Caco-2 (cell line): ENCODE measurements at regions of chr2 and their contacts with region 1.

Region 1: GRCh38 chr2:221322741-221323140 is 249.4 kb downstream of the EPHA4 start:
- DNase-seq: no peak
- H3K4me3 ChIP-seq: no peak overlapping the region
- H3K4me3 Mint-ChIP-seq: peak overlapping the region; percentile 28
- H3K27ac Mint-ChIP-seq: no peak overlapping the region
- H3K4me1 ChIP-seq: no peaks in the 10 kb centered on the region
- H3K4me1 Mint-ChIP-seq: peaks cover 7% of the 10 kb centered on the region
- H3K27me3 ChIP-seq: no peaks in the 10 kb centered on the region
- H3K27me3 Mint-ChIP-seq: no peaks in the 10 kb centered on the region
- CTCF ChIP-seq: no peak

Region 2: GRCh38 chr2:221304916-221305315 is 17.8 kb before region 1 on chr2:
- CTCF ChIA-PET with region 1: no interaction called
- POLR2A ChIA-PET with region 1: no interaction called
- intact Hi-C with region 1: loop called (anchors 2 kb)
- DNase-seq: no peak
- H3K4me3 ChIP-seq: no peak overlapping the region
- H3K4me3 Mint-ChIP-seq: no peak overlapping the region
- H3K27ac Mint-ChIP-seq: no peak overlapping the region
- H3K4me1 ChIP-seq: no peaks in the 10 kb centered on the region
- H3K4me1 Mint-ChIP-seq: peaks cover 4% of the 10 kb centered on the region
- H3K27me3 ChIP-seq: no peaks in the 10 kb centered on the region
- H3K27me3 Mint-ChIP-seq: no peaks in the 10 kb centered on the region
- CTCF ChIP-seq: no peak